ENCODE measurements at regions of chr5 and their contacts with region 1.

Region 1: DNA sequence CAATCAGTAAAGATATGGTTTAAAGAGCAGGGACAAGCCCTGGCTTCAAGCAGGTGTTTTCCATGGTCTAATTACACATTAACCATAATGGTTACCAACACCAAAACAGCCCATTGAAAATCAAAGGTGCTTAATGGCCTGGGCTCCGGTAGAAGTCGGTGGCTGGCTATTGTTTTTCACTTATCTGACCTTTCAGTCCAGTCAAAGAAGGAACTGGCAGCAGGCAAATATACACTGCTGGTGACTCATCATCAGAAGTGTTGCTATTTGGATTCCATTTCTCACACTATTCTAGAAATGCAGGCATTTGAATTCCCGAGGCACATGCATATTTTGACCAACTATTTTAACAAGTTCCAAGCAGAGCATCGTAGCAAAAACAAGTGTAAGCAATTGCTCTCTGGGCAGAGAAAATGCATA is 26.3 kb upstream of the GABRP start:
- DNase-seq: no peak
- H3K4me3 ChIP-seq: no peak overlapping the region
- H3K27ac ChIP-seq: no peak overlapping the region
- H3K4me1 ChIP-seq: peaks cover 8 to 10% (median 9%) of the 10 kb centered on the region in 4 experiments
- H3K27me3 ChIP-seq: no peaks in the 10 kb centered on the region
- CTCF ChIP-seq: no peak
- EP300 ChIP-seq: no peak
- POLR2A ChIP-seq: no peak
- RAD21 ChIP-seq: no peak

Region 2: GRCh38 chr5:170782438-170782837 is 25.2 kb after region 1 on chr5:
- CTCF ChIA-PET with region 1: interaction called, 650 read pairs
- POLR2A ChIA-PET with region 1: interaction called, 22 read pairs
- DNase-seq: no peak
- H3K4me3 ChIP-seq: no peak overlapping the region
- H3K27ac ChIP-seq: no peak overlapping the region
- H3K4me1 ChIP-seq: peaks cover 0 to 5% (median 0%) of the 10 kb centered on the region in 4 experiments; a peak in 1 of 7 replicates
- H3K27me3 ChIP-seq: no peaks in the 10 kb centered on the region
- CTCF ChIP-seq: no peak
- EP300 ChIP-seq: no peak
- POLR2A ChIP-seq: no peak
- RAD21 ChIP-seq: no peak